CD4-positive, alpha-beta memory T cell (primary cell): ENCODE measurements at regions of chr18 and their contacts with region 1.

Region 1: GRCh38 chr18:12890506-12890905 is 6.5 kb upstream of the PTPN2 start:
- DNase-seq: no peak
- H3K4me3 ChIP-seq: no peak overlapping the region
- H3K4me3 Mint-ChIP-seq: no peak overlapping the region
- H3K27ac ChIP-seq: no peak overlapping the region
- H3K27ac Mint-ChIP-seq: no peak overlapping the region
- H3K4me1 ChIP-seq: peaks cover 5% of the 10 kb centered on the region
- H3K4me1 Mint-ChIP-seq: peaks cover 3 to 9% (median 8%) of the 10 kb centered on the region in 4 donors
- H3K27me3 ChIP-seq: peaks cover 1% of the 10 kb centered on the region
- H3K27me3 Mint-ChIP-seq: peaks cover 7% of the 10 kb centered on the region in 2 donors

Region 2: GRCh38 chr18:11553098-11553940 is 1337.2 kb before region 1 on chr18:
- CTCF ChIA-PET with region 1: no interaction called
- POLR2A ChIA-PET with region 1: no interaction called
- intact Hi-C with region 1: no loop called
- DNase-seq: peak in 4 of 5 donors; percentile 30 to 40 (median 39)
- H3K4me3 ChIP-seq: no peak overlapping the region
- H3K4me3 Mint-ChIP-seq: no peak overlapping the region
- H3K27ac ChIP-seq: no peak overlapping the region
- H3K27ac Mint-ChIP-seq: no peak overlapping the region
- H3K4me1 ChIP-seq: no peaks in the 10 kb centered on the region
- H3K4me1 Mint-ChIP-seq: peaks cover 3 to 11% (median 5%) of the 10 kb centered on the region in 4 donors
- H3K27me3 ChIP-seq: no peaks in the 10 kb centered on the region
- H3K27me3 Mint-ChIP-seq: peaks cover 3 to 5% of the 10 kb centered on the region in 2 donors

Region 3: DNA sequence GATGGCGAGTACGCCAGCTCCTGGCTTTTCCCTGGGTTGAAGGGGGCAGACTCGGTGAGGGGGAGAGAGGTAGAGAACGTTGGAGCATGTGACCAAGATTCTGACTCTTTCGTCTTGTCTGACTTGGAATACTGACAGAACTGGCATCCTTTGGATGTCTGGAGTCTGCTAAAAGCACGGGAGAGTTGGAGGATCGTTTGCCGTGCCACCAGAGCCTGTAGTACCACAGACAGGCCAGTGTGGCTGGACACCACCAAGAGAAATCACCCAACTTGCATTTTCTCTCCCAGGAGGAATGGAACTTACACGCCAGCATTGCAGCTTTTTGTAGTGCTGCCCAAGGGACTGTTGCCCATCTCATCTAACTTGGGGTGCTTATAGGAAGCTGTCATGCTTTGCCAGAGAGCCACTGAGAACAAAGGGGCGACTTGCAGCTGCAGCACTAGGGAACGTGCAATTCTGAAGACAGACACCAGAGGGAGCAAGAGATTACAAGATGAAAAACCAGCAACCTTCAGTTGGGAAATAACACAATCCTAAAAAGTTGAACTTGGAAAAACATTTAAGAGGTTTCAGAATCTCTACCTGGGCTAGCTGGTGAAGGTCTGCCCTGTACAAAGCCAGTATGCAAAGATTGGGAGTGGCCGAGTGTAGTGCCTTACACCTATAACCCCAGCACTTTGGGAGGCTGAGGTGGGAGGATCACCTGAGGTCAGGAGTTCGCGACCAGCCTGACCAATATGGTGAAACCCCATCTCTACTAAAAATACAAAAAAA is 163.5 kb before region 1 on chr18:
- CTCF ChIA-PET with region 1: interaction called, 103 read pairs
- POLR2A ChIA-PET with region 1: no interaction called
- intact Hi-C with region 1: loop called (anchors 1 kb)
- DNase-seq: peak; percentile 55 to 68 (median 62)
- H3K4me3 ChIP-seq: no peak overlapping the region
- H3K4me3 Mint-ChIP-seq: no peak overlapping the region
- H3K27ac ChIP-seq: no peak overlapping the region
- H3K27ac Mint-ChIP-seq: peak overlapping the region in 2 of 7 donors; percentile 9 to 82
- H3K4me1 ChIP-seq: no peaks in the 10 kb centered on the region
- H3K4me1 Mint-ChIP-seq: peaks cover 0 to 5% (median 1%) of the 10 kb centered on the region in 4 donors
- H3K27me3 ChIP-seq: no peaks in the 10 kb centered on the region
- H3K27me3 Mint-ChIP-seq: no peaks in the 10 kb centered on the region

Region 4: GRCh38 chr18:12744103-12744502 is 146.4 kb before region 1 on chr18:
- CTCF ChIA-PET with region 1: interaction called, 75 read pairs
- POLR2A ChIA-PET with region 1: no interaction called
- intact Hi-C with region 1: loop called (anchors 1 kb)
- DNase-seq: peak in 4 of 5 donors; percentile 33 to 43 (median 36)
- H3K4me3 ChIP-seq: no peak overlapping the region
- H3K4me3 Mint-ChIP-seq: no peak overlapping the region
- H3K27ac ChIP-seq: no peak overlapping the region
- H3K27ac Mint-ChIP-seq: no peak overlapping the region
- H3K4me1 ChIP-seq: no peaks in the 10 kb centered on the region
- H3K4me1 Mint-ChIP-seq: peaks cover 0 to 2% (median 0%) of the 10 kb centered on the region in 4 donors
- H3K27me3 ChIP-seq: no peaks in the 10 kb centered on the region
- H3K27me3 Mint-ChIP-seq: no peaks in the 10 kb centered on the region

Region 5: DNA sequence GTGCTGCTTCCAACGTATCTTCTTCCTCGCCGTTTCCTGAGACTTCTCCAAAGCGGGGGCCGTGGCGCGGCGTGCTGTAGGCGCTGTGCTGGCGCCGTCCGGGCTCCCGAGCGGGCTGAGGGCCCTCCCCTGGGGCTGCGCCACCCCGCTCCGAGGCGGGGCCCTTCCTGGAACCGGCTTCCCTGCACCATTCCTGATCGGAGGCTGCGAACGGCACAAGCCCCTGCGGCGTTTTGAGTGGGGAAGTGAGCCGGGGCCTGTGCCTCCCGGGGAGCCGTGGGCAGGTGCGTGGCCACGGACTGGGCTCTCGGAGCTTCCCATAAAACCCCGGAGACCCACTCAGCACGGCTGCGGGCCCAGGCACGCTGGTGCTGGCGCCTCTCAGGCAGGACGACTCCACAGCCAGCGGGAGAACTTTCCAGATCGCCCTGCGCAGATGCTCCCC is 113.0 kb before region 1 on chr18:
- CTCF ChIA-PET with region 1: interaction called, 13 read pairs
- POLR2A ChIA-PET with region 1: interaction called, 5 read pairs
- intact Hi-C with region 1: loop called (anchors 2 kb)
- DNase-seq: no peak
- H3K4me3 ChIP-seq: no peak overlapping the region
- H3K4me3 Mint-ChIP-seq: peak overlapping the region in 1 of 8 donors; percentile 74
- H3K27ac ChIP-seq: no peak overlapping the region
- H3K27ac Mint-ChIP-seq: no peak overlapping the region
- H3K4me1 ChIP-seq: peaks cover 5% of the 10 kb centered on the region
- H3K4me1 Mint-ChIP-seq: peaks cover 3 to 17% (median 10%) of the 10 kb centered on the region in 4 donors
- H3K27me3 ChIP-seq: no peaks in the 10 kb centered on the region
- H3K27me3 Mint-ChIP-seq: no peaks in the 10 kb centered on the region

Region 6: GRCh38 chr18:12904012-12904516 is 13.6 kb after region 1 on chr18:
- CTCF ChIA-PET with region 1: interaction called, 11 read pairs
- POLR2A ChIA-PET with region 1: interaction called, 3 read pairs
- intact Hi-C with region 1: no loop called
- DNase-seq: peak in 3 of 5 donors; percentile 24 to 45 (median 37)
- H3K4me3 ChIP-seq: no peak overlapping the region
- H3K4me3 Mint-ChIP-seq: peak overlapping the region; percentile 56 to 87 (median 80)
- H3K27ac ChIP-seq: no peak overlapping the region
- H3K27ac Mint-ChIP-seq: peak overlapping the region; percentile 71 to 96 (median 93)
- H3K4me1 ChIP-seq: peaks cover 14% of the 10 kb centered on the region
- H3K4me1 Mint-ChIP-seq: peaks cover 3 to 8% (median 7%) of the 10 kb centered on the region in 4 donors
- H3K27me3 ChIP-seq: no peaks in the 10 kb centered on the region
- H3K27me3 Mint-ChIP-seq: no peaks in the 10 kb centered on the region

Region 7: DNA sequence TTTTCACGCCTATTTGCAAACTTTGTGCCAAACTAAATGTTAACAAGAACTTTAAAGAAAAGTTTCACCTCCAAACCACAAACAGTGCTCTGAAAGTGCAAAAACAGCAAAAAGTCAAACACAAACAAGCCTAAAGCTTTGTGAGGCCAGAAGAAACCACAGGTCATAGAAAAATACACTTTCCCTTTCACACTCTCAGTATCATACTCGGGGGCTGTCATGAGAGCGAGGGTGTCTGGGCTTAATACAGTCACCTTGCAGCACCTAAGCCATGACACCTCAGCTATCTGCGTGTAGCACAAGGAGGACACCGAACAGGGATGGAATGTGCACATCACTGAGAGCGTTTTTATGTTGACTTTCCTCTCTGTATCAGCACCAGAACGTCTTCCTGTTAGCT is 30.7 kb after region 1 on chr18:
- CTCF ChIA-PET with region 1: interaction called, 14 read pairs
- POLR2A ChIA-PET with region 1: interaction called, 5 read pairs
- intact Hi-C with region 1: no loop called
- DNase-seq: peak; percentile 22 to 50 (median 42)
- H3K4me3 ChIP-seq: peak overlapping the region in 1 of 2 donors; percentile 17
- H3K4me3 Mint-ChIP-seq: peak overlapping the region; percentile 60 to 75 (median 71)
- H3K27ac ChIP-seq: no peak overlapping the region
- H3K27ac Mint-ChIP-seq: peak overlapping the region; percentile 44 to 85 (median 62)
- H3K4me1 ChIP-seq: peaks cover 17% of the 10 kb centered on the region
- H3K4me1 Mint-ChIP-seq: peaks cover 13 to 24% (median 19%) of the 10 kb centered on the region in 4 donors
- H3K27me3 ChIP-seq: no peaks in the 10 kb centered on the region
- H3K27me3 Mint-ChIP-seq: no peaks in the 10 kb centered on the region